K562 (cell line): ENCODE measurements at regions of chr2 and their contacts with region 1.

Region 1: DNA sequence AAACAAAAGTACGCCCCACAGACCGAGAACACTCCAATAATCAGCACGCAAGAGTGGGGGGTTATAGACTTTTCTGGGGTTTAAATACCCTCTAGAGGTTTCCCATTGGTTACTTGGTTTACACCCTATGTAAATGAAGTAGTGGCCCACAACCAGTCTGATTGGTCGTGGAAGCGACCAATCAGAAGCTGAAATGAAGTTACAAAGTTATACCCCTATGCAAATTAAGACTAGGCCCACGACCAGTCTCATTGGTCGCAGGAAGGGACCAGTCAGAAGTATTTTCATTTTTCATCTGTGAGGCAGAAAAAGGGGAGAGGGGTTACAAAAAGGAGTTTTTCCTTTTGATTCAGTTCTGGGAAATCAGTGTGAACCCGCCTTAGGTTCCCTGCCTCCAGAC is 55.3 kb upstream of the YWHAQ start:
- DNase-seq: peak in 2 of 4 experiments; percentile 51 to 75
- ATAC-seq: peak; percentile 90
- H3K4me3 ChIP-seq: no peak overlapping the region
- H3K27ac ChIP-seq: no peak overlapping the region
- H3K4me1 ChIP-seq: peaks cover 0 to 10% of the 10 kb centered on the region in 2 experiments; a peak in 3 of 5 replicates
- H3K27me3 ChIP-seq: no peaks in the 10 kb centered on the region
- CTCF ChIP-seq: no peak
- EP300 ChIP-seq: no peak
- POLR2A ChIP-seq: no peak
- RAD21 ChIP-seq: no peak

Region 2: DNA sequence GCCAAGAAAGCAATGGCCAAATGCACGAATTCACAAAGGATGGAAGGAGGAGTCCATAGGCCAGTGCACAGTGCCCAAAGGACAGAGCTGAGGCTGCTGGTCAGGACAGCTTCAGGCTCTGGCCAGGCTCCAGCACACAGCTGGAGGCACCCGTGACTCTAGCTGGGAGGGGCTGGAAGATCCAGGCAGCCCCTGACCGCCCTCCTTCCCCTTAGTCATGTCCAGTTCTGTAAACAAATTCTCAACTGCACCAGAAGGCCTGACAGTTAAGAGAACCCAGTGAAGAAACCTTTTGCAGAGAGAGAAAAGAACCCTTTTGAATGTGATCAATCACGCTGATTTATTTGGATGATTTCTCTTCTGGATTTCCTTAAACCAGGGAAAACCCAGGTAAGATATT is 47.5 kb before region 1 on chr2:
- CTCF ChIA-PET with region 1: no interaction called
- POLR2A ChIA-PET with region 1: no interaction called
- in situ Hi-C with region 1: no loop called
- intact Hi-C with region 1: loop called (anchors 5 kb)
- DNase-seq: peak; percentile 58 to 91 (median 74)
- ATAC-seq: peak; percentile 94
- H3K4me3 ChIP-seq: no peak overlapping the region
- H3K27ac ChIP-seq: no peak overlapping the region; the same call in 2 of the 3 replicates
- H3K4me1 ChIP-seq: peaks cover 33 to 43% of the 10 kb centered on the region in 2 experiments; a peak in 4 of 5 replicates
- H3K27me3 ChIP-seq: peaks cover 0 to 9% of the 10 kb centered on the region in 2 experiments; a peak in 2 of 5 replicates
- CTCF ChIP-seq: no peak
- EP300 ChIP-seq: peak; percentile 72
- POLR2A ChIP-seq: no peak
- RAD21 ChIP-seq: no peak